ENCODE measurements at regions of chr11 and their contacts with region 1.

Region 1: DNA sequence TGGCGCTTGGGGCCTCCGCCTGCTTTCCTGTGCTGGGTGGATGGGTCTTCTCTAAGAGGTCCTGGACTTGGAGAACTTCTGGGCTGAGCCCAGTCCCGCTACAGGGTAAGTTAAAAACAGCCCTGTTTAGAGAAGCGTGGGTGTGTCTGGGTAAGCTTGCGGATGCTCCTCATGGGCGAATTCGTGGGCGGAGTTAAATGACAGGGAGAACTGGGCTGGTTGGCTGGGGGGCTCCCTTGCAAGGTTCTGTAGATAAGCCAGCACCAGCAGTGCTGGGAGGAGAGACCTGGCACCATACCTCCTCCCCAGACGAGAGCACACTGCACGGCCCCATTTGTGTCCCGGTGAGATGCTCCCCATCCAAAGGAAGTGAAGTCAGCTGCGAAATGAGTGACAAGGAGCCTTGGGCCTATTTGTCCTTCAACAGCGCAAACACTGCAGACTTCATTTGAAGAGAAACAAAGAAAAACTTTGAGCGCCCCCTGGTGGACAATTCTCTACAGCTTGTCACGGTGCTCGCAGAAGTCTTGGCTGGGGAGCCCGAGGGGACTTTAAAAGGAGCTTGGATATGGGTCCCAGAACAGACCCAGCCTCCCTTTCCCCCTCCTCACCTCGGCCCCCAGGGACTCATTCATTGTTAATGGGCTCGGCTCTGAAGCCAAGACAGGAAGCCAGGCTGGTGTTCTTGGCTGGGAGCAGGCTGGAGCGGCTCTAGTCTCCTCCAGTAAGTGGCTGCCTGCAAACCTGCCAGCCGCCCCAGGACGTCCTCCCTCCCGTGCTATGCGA is 39.5 kb downstream of the TP53I11 start:
- DNase-seq: peak; percentile 91
- ATAC-seq: peak; percentile 82
- H3K4me3 Mint-ChIP-seq: no peak overlapping the region
- H3K27ac Mint-ChIP-seq: no peak overlapping the region
- H3K4me1 Mint-ChIP-seq: no peaks in the 10 kb centered on the region
- H3K27me3 Mint-ChIP-seq: peaks cover 3% of the 10 kb centered on the region

Region 2: GRCh38 chr11:44842220-44842619 is 69.0 kb before region 1 on chr11:
- CTCF ChIA-PET with region 1: no interaction called
- POLR2A ChIA-PET with region 1: no interaction called
- DNase-seq: no peak
- ATAC-seq: no peak
- H3K4me3 Mint-ChIP-seq: no peak overlapping the region
- H3K27ac Mint-ChIP-seq: no peak overlapping the region
- H3K4me1 Mint-ChIP-seq: no peaks in the 10 kb centered on the region
- H3K27me3 Mint-ChIP-seq: peaks cover 8% of the 10 kb centered on the region

Region 3: DNA sequence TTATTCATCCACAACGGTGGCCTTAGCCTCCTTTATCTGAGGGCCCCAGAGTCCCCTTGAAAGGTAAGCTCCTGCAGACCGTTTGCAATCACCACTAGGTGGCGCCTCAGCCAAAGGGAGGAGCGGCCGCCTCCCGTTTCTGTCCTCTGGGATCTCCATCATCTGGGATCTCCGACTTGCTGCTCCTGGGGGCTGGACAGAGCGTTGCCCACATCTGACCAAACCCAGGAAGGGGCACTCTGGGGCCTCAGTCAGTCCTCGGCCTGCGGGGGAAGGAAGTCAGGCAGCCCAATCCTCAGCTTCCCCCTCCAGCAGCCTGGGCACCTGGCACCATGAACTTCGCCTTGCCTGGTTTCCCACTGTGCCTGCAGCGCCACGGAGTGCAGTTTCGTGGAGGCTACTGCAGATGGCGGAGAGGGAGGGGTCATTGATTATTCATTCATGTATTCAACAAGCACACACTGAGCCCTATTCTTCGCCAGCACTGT is 16.0 kb after region 1 on chr11:
- CTCF ChIA-PET with region 1: interaction called, 23 read pairs
- POLR2A ChIA-PET with region 1: no interaction called
- DNase-seq: peak; percentile 65
- ATAC-seq: peak; percentile 65
- H3K4me3 Mint-ChIP-seq: no peak overlapping the region
- H3K27ac Mint-ChIP-seq: no peak overlapping the region
- H3K4me1 Mint-ChIP-seq: no peaks in the 10 kb centered on the region
- H3K27me3 Mint-ChIP-seq: no peaks in the 10 kb centered on the region

Region 4: DNA sequence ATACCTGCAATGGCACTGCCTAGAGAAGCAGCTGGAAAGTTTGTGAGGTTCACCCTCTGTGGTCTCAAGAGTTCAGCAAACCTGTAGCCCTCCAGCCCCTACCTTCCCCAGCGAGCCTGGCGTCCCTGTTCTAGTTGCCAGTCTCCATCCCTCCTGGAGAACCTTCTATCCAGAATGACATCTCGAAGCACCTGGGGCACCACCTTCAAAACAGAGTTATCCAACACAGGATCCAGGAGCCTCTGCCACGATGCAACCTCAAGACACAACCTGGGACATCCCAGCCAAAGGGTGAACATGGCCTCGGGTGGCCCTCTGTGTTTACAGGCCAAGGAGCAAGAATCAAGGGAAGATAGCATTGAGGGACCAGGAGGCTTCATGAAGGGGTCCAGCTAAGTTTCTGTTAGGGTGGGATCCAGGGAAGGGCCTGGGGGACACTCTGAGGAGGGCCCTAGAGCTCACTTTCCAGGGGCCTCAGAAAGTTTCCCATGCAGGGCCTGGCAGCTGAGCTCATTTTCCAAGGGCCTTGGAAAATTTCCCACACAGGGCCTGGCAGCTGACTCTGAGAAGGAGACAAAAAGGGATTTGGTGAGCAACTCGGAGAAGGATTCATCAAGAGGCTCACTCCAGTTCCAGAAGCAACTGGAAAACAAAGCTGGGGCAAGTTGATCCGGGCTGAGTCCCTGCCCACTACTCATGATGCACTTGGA is 411.8 kb after region 1 on chr11:
- CTCF ChIA-PET with region 1: no interaction called
- POLR2A ChIA-PET with region 1: no interaction called
- DNase-seq: peak; percentile 1
- ATAC-seq: no peak
- H3K4me3 Mint-ChIP-seq: no peak overlapping the region
- H3K27ac Mint-ChIP-seq: no peak overlapping the region
- H3K4me1 Mint-ChIP-seq: no peaks in the 10 kb centered on the region
- H3K27me3 Mint-ChIP-seq: peaks cover 22% of the 10 kb centered on the region